ENCODE measurements at regions of chr11 and their contacts with region 1.

Region 1: DNA sequence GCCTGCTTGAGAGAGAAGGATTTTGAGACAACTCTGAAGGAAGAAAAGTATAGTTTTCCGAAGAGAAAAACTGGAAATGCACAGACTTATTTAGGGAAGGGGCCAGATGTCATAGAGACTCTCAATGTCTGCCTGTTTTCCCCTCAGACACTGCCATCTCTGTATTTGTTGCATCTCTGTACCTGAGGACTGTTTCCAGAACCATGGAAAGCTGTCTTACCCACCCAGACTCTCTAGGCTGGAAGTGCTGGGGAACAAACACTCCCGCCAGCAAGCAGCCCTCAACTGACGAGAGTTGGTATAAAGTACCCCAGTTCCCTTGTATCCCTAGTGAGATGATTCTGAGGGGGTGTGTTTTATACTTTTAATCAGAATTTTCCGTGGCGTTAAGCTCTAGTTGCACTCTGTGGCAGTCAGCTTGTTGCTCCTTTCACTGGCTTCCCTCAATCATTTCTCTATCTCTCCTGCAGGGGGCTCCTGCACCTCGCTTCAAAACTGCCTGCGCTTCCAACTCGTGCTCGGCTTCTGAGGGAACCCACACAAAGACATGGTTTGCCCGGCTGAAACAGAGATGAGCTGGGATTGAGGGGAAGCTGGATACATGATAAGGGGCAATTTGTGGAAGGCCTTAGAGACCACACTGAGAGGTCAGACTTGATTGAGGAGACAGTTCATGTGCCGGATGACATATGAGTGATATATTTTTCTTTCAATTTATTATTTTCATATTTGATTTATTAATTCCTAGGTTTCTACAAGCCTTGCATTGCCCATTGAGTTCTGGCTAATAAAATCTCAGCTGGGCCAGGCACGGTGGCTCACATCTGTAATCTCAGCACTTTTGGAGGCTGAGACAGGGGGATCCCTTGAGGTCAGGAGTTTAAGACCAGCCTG is 36.9 kb upstream of the CLPB start:
- DNase-seq: no peak
- ATAC-seq: peak; percentile 93
- H3K4me3 ChIP-seq: no peak overlapping the region
- H3K27ac ChIP-seq: no peak overlapping the region
- H3K4me1 ChIP-seq: no peaks in the 10 kb centered on the region
- H3K27me3 ChIP-seq: peaks cover 0 to 8% of the 10 kb centered on the region in 2 experiments; a peak in 1 of 4 replicates
- CTCF ChIP-seq: peak; percentile 83 to 86 (median 85)
- EP300 ChIP-seq: no peak
- POLR2A ChIP-seq: no peak
- RAD21 ChIP-seq: peak; percentile 71

Region 2: GRCh38 chr11:72189461-72190275 is 281.6 kb before region 1 on chr11:
- CTCF ChIA-PET with region 1: no interaction called
- POLR2A ChIA-PET with region 1: no interaction called
- RAD21 ChIA-PET with region 1: no interaction called
- SMC1A ChIA-PET with region 1: no interaction called
- in situ Hi-C with region 1: no loop called
- intact Hi-C with region 1: no loop called
- DNase-seq: no peak
- ATAC-seq: no peak
- H3K4me3 ChIP-seq: no peak overlapping the region
- H3K27ac ChIP-seq: no peak overlapping the region
- H3K4me1 ChIP-seq: no peaks in the 10 kb centered on the region
- H3K27me3 ChIP-seq: no peaks in the 10 kb centered on the region
- CTCF ChIP-seq: no peak
- EP300 ChIP-seq: no peak
- POLR2A ChIP-seq: no peak
- RAD21 ChIP-seq: no peak

Region 3: GRCh38 chr11:72454791-72455190 is 16.5 kb before region 1 on chr11:
- CTCF ChIA-PET with region 1: interaction called, 30 read pairs
- POLR2A ChIA-PET with region 1: no interaction called
- RAD21 ChIA-PET with region 1: interaction called, 4 read pairs
- SMC1A ChIA-PET with region 1: interaction called, 5 read pairs
- in situ Hi-C with region 1: no loop called
- intact Hi-C with region 1: no loop called
- DNase-seq: no peak
- ATAC-seq: no peak
- H3K4me3 ChIP-seq: no peak overlapping the region
- H3K27ac ChIP-seq: no peak overlapping the region
- H3K4me1 ChIP-seq: no peaks in the 10 kb centered on the region
- H3K27me3 ChIP-seq: no peaks in the 10 kb centered on the region
- CTCF ChIP-seq: no peak
- EP300 ChIP-seq: no peak
- POLR2A ChIP-seq: no peak
- RAD21 ChIP-seq: no peak

Region 4: DNA sequence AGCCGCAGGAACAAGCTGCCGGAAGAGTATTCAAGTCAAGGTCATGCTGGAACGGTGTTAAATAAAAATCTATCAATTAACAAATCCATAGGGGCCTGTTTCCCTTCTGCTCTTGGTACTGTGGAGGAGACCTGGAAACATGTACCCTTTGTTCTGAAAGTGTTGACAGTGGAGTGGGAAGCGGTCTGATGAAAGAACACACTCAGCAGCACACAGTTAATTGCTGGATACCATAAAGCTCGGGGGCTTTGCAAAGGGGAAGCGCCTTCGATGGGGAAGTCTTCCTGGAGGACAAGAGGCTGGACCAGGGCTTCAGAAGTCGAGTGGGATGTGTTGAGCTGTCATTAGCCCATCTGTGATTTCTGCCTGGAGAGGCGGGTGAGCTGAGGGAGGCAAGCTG is 75.6 kb after region 1 on chr11:
- CTCF ChIA-PET with region 1: interaction called, 47 read pairs
- POLR2A ChIA-PET with region 1: no interaction called
- RAD21 ChIA-PET with region 1: interaction called, 6 read pairs
- SMC1A ChIA-PET with region 1: interaction called, 4 read pairs
- in situ Hi-C with region 1: no loop called
- intact Hi-C with region 1: no loop called
- DNase-seq: no peak
- ATAC-seq: no peak
- H3K4me3 ChIP-seq: no peak overlapping the region
- H3K27ac ChIP-seq: no peak overlapping the region
- H3K4me1 ChIP-seq: no peaks in the 10 kb centered on the region
- H3K27me3 ChIP-seq: peaks cover 0 to 2% of the 10 kb centered on the region in 2 experiments; a peak in 2 of 4 replicates
- CTCF ChIP-seq: no peak
- EP300 ChIP-seq: no peak
- POLR2A ChIP-seq: no peak
- RAD21 ChIP-seq: no peak

Region 5: DNA sequence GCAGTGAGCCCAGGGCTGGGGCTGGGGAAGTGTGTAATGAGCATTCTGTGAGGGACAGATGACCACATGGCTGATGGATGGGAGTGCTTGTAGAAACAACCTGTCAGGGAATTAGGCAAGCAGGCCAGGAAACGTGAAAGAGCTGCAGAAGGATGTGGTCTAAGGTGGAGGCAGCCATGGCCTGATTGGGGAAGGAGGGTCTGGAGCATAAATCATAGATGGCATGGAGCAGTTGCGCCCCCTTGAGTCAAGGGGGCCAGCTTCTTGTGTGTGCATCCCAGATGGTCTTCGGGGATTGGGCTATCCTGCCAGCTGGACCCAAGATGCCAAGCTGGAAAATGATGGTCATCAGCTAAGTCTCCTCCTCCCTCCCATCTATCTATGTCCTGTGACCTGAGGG is 82.5 kb after region 1 on chr11:
- CTCF ChIA-PET with region 1: interaction called, 47 read pairs
- POLR2A ChIA-PET with region 1: no interaction called
- RAD21 ChIA-PET with region 1: interaction called, 15 read pairs
- SMC1A ChIA-PET with region 1: interaction called, 17 read pairs
- in situ Hi-C with region 1: no loop called
- intact Hi-C with region 1: no loop called
- DNase-seq: no peak
- ATAC-seq: peak; percentile 62
- H3K4me3 ChIP-seq: no peak overlapping the region
- H3K27ac ChIP-seq: no peak overlapping the region
- H3K4me1 ChIP-seq: no peaks in the 10 kb centered on the region
- H3K27me3 ChIP-seq: peaks cover 0 to 3% of the 10 kb centered on the region in 2 experiments; a peak in 1 of 4 replicates
- CTCF ChIP-seq: peak; percentile 34 to 46 (median 39); a peak in 5 of 6 replicates
- EP300 ChIP-seq: no peak
- POLR2A ChIP-seq: no peak
- RAD21 ChIP-seq: peak; percentile 43

Region 6: DNA sequence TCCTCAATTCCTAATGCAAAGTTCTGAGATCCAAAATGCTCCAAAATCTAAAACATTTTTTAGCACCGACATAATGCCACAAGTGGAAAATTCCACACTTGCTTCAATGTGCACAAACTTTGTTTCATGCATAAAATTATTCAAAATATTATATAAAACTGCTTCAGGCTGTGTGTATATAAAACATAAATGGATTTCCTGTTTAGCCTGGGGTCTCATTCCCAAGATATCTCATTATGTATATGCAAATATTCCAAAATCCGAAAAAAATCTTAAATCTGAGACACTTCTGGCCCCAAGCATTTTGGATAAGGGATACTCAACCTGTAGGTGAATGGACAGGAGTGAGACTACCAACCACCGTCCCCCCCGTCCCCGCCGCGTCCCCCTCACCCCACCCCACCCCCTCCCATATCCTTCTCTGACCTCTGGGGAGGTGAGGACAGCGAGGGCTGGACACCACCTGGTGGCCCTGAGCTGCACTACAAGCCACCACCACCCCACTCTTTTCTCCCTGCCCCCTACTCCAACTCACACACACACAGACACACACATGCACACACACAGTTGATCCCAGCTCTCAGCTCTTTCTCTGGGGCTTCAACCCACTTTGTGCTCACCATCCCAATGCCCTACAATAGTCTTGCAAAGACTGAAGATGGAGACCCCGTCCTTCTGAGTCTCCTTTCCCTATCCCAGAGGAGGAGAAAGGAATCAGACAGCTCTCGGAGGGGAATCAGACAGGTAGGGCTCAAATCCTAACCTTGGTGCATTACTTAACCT is 102.0 kb after region 1 on chr11:
- CTCF ChIA-PET with region 1: interaction called, 46 read pairs
- POLR2A ChIA-PET with region 1: no interaction called
- RAD21 ChIA-PET with region 1: interaction called, 8 read pairs
- SMC1A ChIA-PET with region 1: interaction called, 14 read pairs
- in situ Hi-C with region 1: loop called (anchors 10 kb)
- intact Hi-C with region 1: loop called (anchors 1 kb)
- DNase-seq: no peak
- ATAC-seq: peak; percentile 97
- H3K4me3 ChIP-seq: no peak overlapping the region
- H3K27ac ChIP-seq: no peak overlapping the region
- H3K4me1 ChIP-seq: no peaks in the 10 kb centered on the region
- H3K27me3 ChIP-seq: peaks cover 3% of the 10 kb centered on the region in 2 experiments; a peak in 3 of 4 replicates
- CTCF ChIP-seq: peak; percentile 40 to 82 (median 58)
- EP300 ChIP-seq: no peak
- POLR2A ChIP-seq: no peak
- RAD21 ChIP-seq: peak; percentile 68

Region 7: DNA sequence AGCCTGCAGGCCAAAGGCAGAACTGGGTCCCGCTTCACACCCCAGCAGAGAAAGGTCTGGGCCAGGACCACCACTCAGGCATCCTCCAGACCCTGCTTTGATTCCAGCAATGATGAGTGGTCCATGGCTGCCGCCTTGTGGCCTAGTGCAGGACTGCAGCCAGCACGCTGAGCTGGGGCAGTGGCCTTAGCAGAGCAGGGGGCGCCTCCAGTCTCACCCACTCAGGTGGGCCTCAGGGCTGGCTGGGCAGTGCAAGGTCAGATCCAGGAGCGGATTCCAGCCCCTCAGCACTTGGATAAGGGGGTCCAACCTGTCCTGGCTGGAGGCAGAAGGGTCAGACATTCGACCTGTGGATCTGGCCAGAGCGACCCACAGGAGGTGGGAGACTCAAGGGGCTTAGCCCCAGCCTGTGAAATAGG is 212.5 kb after region 1 on chr11:
- CTCF ChIA-PET with region 1: interaction called, 11 read pairs
- POLR2A ChIA-PET with region 1: no interaction called
- RAD21 ChIA-PET with region 1: interaction called, 7 read pairs
- SMC1A ChIA-PET with region 1: interaction called, 5 read pairs
- in situ Hi-C with region 1: no loop called
- intact Hi-C with region 1: loop called (anchors 5 kb)
- DNase-seq: no peak
- ATAC-seq: peak; percentile 83
- H3K4me3 ChIP-seq: no peak overlapping the region
- H3K27ac ChIP-seq: no peak overlapping the region
- H3K4me1 ChIP-seq: no peaks in the 10 kb centered on the region
- H3K27me3 ChIP-seq: no peaks in the 10 kb centered on the region
- CTCF ChIP-seq: peak; percentile 89 to 99 (median 98)
- EP300 ChIP-seq: no peak
- POLR2A ChIP-seq: peak; percentile 49; the same call in 1 of the 2 replicates
- RAD21 ChIP-seq: peak; percentile 84

Measured in GM12878 (cell line).